Ovary (tissue), 10 donors: ENCODE measurements at regions of chr12 and their contacts with region 1.

Region 1: DNA sequence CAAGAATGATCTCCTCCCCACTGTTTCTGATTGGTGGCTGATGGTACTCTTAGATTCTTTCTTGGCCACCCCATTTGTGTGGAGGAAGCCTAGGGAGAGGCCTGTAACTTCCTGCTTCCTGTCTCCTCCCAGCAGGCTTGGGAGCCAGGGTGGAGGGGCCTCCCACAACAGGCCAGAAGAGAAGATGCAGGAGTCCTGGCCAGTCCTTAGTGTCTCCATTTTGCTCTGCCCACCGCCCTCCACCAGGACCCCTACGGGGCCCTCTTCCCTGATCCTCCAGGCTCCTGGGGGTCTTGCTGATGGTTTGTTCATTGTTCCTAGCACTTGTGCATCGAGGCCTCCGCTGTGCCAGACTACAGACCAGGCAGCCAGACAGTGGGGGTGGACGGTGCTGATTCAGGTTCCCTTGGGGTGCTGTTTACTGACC is 6.8 kb downstream of the TSPAN9 start:
- DNase-seq: no peak
- H3K4me3 ChIP-seq: no peak overlapping the region
- H3K27ac ChIP-seq: no peak overlapping the region
- H3K4me1 ChIP-seq: peaks cover 6% of the 10 kb centered on the region
- H3K27me3 ChIP-seq: no peaks in the 10 kb centered on the region
- CTCF ChIP-seq: no peak
- EP300 ChIP-seq: no peak
- POLR2A ChIP-seq: no peak

Region 2: DNA sequence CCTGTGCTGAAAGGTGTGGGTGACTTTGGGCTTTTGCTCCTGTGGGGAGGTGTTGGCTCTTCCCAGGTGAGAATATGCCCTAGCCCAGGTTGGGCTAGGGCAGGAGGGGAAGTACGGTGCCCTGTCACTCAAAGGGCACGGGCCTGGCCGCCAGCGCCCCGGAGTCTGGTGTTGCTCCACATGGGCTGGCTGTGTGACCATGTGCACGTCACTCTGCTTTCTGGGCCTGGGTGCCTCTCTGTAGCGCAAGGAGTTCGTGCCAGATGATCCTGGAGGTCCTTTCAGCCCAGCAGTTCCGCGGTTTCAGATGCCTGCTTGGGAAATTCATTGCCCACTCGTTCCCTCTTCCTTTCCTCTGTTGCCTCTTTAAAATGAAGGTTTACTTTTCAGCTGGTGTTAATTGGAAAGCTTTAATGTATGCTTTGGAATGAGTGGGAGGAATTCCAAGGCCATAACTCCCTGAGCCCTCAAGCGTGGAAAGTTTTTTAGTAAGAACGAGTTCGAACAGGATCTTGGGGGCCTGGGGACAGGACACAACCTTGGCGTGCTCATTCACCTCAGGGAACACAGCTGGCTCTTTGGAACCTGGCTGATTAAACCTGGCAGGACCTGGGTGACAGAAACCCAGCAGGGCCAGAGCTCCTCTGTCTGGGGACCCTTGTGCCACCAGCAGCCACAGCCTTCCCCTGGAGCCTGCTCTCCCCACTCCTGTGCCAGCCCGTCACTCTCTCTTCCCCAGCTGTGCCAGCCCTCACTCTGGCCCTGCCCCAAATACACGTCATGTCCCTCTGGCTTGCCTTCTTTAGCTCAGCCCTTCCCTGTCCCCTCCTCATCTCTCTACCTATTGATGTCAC is 36.0 kb after region 1 on chr12:
- intact Hi-C with region 1: loop called in 1 of 4 experiments (anchors 5 kb)
- DNase-seq: peak in 1 of 5 donors; percentile 49
- H3K4me3 ChIP-seq: no peak overlapping the region
- H3K27ac ChIP-seq: peak overlapping the region in 1 of 2 donors; percentile 53
- H3K4me1 ChIP-seq: peaks cover 23% of the 10 kb centered on the region
- H3K27me3 ChIP-seq: no peaks in the 10 kb centered on the region
- CTCF ChIP-seq: no peak
- EP300 ChIP-seq: no peak
- POLR2A ChIP-seq: no peak

Region 3: DNA sequence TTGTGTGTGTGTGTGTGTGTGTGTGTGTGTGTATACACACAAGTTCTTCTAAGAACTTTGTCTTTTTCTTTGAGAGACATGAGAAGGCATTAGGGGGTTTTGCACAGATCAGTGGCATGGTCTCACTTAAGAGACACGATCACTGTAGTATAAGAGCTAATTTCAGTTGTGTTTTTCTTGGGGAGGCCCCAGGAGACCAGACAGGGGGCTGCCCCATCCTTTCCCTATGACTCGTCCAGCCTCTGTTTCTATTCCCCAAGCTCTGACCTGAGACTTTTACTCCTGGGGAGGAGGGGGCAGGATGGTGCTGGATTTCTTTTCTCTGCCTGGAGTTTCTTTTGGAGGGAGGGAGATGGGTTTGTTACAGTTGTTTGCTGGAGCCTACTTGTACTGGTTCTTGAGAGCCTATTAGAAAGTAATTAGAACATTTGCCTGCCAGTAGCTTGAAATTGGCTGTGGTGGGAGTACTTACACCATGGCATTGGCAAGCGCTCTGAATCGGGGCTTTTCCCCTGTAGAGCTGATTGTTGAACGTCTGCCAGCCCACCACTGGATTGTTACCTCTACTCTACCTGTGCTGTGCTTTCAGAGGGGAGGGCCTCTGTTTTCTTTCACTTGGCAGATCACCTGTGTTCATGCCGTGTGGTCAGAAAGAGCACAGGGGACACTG is 102.7 kb after region 1 on chr12:
- intact Hi-C with region 1: no loop called
- DNase-seq: no peak
- H3K4me3 ChIP-seq: no peak overlapping the region
- H3K27ac ChIP-seq: no peak overlapping the region
- H3K4me1 ChIP-seq: peaks cover 4% of the 10 kb centered on the region
- H3K27me3 ChIP-seq: no peaks in the 10 kb centered on the region
- CTCF ChIP-seq: no peak
- EP300 ChIP-seq: no peak
- POLR2A ChIP-seq: no peak